Cardiac septum (tissue), 1 donor: ENCODE measurements at regions of chr19 and their contacts with region 1.

Region 1: GRCh38 chr19:21396893-21397572 is at the start of gene ZNF493:
- DNase-seq: peak; percentile 96
- total RNA-seq, gene ZNF493: 11.5 TPM

Region 2: DNA sequence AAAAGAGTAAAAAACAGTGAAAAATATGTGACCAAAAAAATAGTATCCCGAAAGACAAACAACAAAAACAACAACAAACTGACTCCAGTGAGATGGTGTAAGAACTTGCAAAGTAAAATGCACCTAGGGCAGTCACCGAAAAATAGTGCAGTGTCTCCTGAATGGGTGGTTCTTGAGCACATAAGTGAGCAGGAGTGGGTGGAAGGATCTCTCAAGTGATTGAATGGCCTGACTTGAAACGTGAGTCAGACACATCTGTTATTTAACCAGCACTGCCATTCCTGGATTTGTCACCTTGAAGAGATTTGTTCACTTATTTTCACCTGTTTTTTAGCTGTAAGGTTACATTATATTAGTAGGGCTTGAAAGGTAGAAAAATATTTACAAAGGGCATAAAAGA is 34.7 kb before region 1 on chr19:
- intact Hi-C with region 1: loop called (anchors 5 kb)
- DNase-seq: no peak

Region 3: GRCh38 chr19:21439201-21439751 is 42.2 kb after region 1 on chr19:
- intact Hi-C with region 1: no loop called
- DNase-seq: no peak